ENCODE measurements at regions of chr4 and their contacts with region 1.

Region 1: DNA sequence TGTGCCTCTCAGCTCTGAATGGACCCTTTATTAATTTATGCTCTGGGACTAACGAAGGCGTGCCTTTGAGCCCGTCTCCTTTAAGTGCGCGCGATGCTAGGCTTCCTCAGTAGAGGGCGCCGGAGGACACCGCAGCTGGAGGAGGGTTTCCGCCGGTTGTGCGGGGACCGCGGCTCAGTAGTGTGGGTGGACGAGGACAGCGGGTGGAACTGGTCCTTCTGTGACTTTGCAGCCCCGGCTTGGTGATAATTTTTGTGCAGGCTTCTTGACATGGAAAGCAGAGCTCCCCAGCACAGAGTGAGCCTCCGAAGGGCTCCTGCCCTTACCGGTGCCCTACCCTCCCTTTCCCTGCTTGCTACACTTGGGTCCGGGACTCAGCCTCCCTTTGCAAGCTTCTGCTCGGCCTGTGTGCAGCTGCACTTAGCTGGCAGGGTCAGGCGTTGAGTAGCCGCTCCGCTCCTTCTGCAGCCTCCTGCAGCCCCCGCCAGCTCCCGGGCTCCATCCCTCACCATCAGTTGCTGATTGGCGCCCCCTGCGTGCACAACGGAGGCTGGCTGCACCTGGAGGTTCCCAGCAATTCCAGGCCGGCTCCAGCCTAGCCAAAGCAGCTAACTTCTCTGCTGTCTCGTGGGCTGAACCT is 26.8 kb upstream of the BOD1L1 start:
- DNase-seq: no peak
- ATAC-seq: peak; percentile 98
- H3K4me3 ChIP-seq: peak overlapping the region; percentile 64
- H3K27ac ChIP-seq: no peak overlapping the region
- H3K4me1 ChIP-seq: no peaks in the 10 kb centered on the region
- H3K27me3 ChIP-seq: no peaks in the 10 kb centered on the region; a peak in 1 of 4 replicates
- CTCF ChIP-seq: peak; percentile 82 to 96 (median 86)
- EP300 ChIP-seq: no peak
- POLR2A ChIP-seq: no peak
- RAD21 ChIP-seq: peak; percentile 71

Region 2: DNA sequence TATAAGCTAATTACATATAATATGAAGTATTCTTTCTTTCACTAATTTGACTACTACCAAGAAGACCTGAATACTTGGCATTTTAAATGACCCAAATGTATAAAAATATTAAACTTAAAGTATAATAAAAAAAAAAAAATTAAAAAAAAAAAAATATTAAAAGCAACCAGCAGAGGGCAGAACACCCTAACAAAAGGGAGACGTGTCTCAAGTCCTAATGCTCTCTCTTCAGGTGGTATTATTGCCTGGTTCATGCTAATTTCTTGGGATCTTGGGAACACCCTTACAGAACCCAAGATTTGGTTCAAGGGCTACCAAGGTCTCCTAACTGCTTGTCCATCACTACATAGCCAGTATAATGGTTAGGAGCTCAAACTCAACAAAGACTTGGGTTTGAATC is 924.9 kb before region 1 on chr4:
- CTCF ChIA-PET with region 1: interaction called, 3 read pairs
- POLR2A ChIA-PET with region 1: no interaction called
- RAD21 ChIA-PET with region 1: no interaction called
- SMC1A ChIA-PET with region 1: no interaction called
- in situ Hi-C with region 1: no loop called
- intact Hi-C with region 1: loop called (anchors 5 kb)
- DNase-seq: no peak
- ATAC-seq: peak; percentile 48; the same call in 2 of the 3 replicates
- H3K4me3 ChIP-seq: no peak overlapping the region
- H3K27ac ChIP-seq: no peak overlapping the region
- H3K4me1 ChIP-seq: no peaks in the 10 kb centered on the region
- H3K27me3 ChIP-seq: no peaks in the 10 kb centered on the region
- CTCF ChIP-seq: peak in 2 of 3 experiments; percentile 29 to 35; a peak in 3 of 6 replicates
- EP300 ChIP-seq: no peak
- POLR2A ChIP-seq: no peak
- RAD21 ChIP-seq: peak; percentile 74

Region 3: GRCh38 chr4:13642170-13642950 is 11.9 kb before region 1 on chr4:
- CTCF ChIA-PET with region 1: interaction called, 14 read pairs
- POLR2A ChIA-PET with region 1: no interaction called
- RAD21 ChIA-PET with region 1: interaction called, 3 read pairs
- SMC1A ChIA-PET with region 1: interaction called, 3 read pairs
- in situ Hi-C with region 1: no loop called
- intact Hi-C with region 1: no loop called
- DNase-seq: no peak
- ATAC-seq: no peak
- H3K4me3 ChIP-seq: no peak overlapping the region
- H3K27ac ChIP-seq: no peak overlapping the region
- H3K4me1 ChIP-seq: no peaks in the 10 kb centered on the region
- H3K27me3 ChIP-seq: no peaks in the 10 kb centered on the region; a peak in 1 of 4 replicates
- CTCF ChIP-seq: no peak
- EP300 ChIP-seq: no peak
- POLR2A ChIP-seq: no peak
- RAD21 ChIP-seq: no peak

Region 4: GRCh38 chr4:14130551-14130950 is 476.3 kb after region 1 on chr4:
- CTCF ChIA-PET with region 1: interaction called, 3 read pairs
- POLR2A ChIA-PET with region 1: no interaction called
- RAD21 ChIA-PET with region 1: no interaction called
- SMC1A ChIA-PET with region 1: no interaction called
- in situ Hi-C with region 1: no loop called
- intact Hi-C with region 1: loop called (anchors 10 kb)
- DNase-seq: no peak
- ATAC-seq: no peak
- H3K4me3 ChIP-seq: no peak overlapping the region
- H3K27ac ChIP-seq: no peak overlapping the region
- H3K4me1 ChIP-seq: peaks cover 3% of the 10 kb centered on the region
- H3K27me3 ChIP-seq: no peaks in the 10 kb centered on the region
- CTCF ChIP-seq: no peak
- EP300 ChIP-seq: no peak
- POLR2A ChIP-seq: no peak
- RAD21 ChIP-seq: no peak

Region 5: DNA sequence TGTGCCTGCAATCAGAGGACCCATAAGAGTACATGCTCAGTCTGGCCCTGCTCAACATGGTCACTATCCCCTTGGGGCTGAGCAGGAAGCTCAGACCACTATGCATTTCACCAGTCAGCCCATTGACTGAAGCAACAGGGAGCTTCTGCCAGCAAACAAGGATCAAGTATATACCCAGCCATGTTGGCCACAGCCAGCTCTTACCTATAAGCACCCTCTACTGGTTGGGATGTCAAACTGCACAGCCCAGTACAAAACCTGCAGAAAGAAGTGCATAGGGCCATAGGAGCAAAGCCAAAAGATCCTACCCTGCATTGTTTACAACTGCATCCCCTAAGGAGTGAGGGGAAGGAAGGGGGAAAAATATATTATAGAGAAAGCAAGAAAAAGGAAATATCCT is 1133.6 kb after region 1 on chr4:
- CTCF ChIA-PET with region 1: interaction called, 5 read pairs
- POLR2A ChIA-PET with region 1: no interaction called
- RAD21 ChIA-PET with region 1: no interaction called
- SMC1A ChIA-PET with region 1: interaction called, 3 read pairs
- in situ Hi-C with region 1: no loop called
- intact Hi-C with region 1: loop called (anchors 5 kb)
- DNase-seq: no peak
- ATAC-seq: peak; percentile 50
- H3K4me3 ChIP-seq: no peak overlapping the region
- H3K27ac ChIP-seq: no peak overlapping the region
- H3K4me1 ChIP-seq: 0 out of 2 replicates have a peak, but pooled peaks cover 3% of the 10 kb centered on the region
- H3K27me3 ChIP-seq: no peaks in the 10 kb centered on the region
- CTCF ChIP-seq: peak in 2 of 3 experiments; percentile 34 to 46; a peak in 3 of 6 replicates
- EP300 ChIP-seq: no peak
- POLR2A ChIP-seq: no peak
- RAD21 ChIP-seq: peak; percentile 44

Region 6: DNA sequence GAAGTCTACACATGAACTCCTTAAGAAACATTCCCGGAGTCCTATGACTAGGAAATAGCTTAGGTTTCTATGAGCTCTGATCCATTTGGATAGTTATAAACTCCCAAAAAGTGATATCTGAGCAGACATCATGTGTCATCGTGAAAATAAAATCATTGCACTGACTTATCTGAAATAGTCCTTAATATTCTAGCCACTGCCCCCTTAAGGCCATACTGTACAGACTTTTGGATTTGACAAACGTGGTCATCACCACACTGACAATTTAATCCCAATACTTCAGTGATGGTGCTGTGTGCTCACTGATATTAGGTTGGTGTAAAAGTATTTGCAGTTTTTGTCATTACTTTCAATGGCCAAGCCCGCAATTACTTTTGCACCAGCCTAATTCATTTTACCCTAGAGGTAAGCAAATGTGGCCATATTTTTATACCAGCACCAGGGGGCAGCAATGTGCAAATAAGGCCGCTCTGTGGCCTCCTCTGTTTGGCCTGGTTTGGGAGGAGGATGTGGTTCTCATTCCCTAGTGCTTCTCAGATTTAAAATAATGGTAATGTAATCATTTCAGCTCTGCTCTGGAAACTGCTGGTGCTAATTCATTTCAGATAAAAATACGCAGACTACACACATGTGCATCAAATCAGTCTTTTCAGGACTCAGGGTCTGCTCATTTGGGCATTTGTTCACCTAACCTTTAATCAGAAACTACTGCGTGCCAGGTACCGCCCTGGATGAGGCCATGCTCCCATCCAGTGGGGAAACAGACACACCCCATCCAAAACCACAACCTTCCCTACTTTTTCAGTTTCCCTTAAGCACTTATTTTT is 1577.2 kb after region 1 on chr4:
- CTCF ChIA-PET with region 1: interaction called, 3 read pairs
- POLR2A ChIA-PET with region 1: no interaction called
- RAD21 ChIA-PET with region 1: no interaction called
- SMC1A ChIA-PET with region 1: no interaction called
- in situ Hi-C with region 1: no loop called
- intact Hi-C with region 1: loop called (anchors 1 kb)
- DNase-seq: peak; percentile 16
- ATAC-seq: peak; percentile 97
- H3K4me3 ChIP-seq: no peak overlapping the region
- H3K27ac ChIP-seq: no peak overlapping the region
- H3K4me1 ChIP-seq: peaks cover 11% of the 10 kb centered on the region
- H3K27me3 ChIP-seq: no peaks in the 10 kb centered on the region; a peak in 1 of 4 replicates
- CTCF ChIP-seq: peak; percentile 67 to 78 (median 69)
- EP300 ChIP-seq: no peak
- POLR2A ChIP-seq: no peak
- RAD21 ChIP-seq: peak; percentile 71

Measured in GM12878 (cell line).